HepG2 (cell line): ENCODE measurements at regions of chr17 and their contacts with region 1.

Region 1: GRCh38 chr17:54992797-54993639 is 24.5 kb downstream of the STXBP4 start:
- DNase-seq: peak; percentile 65
- ATAC-seq: peak; percentile 86
- H3K4me3 ChIP-seq: no peak overlapping the region
- H3K27ac ChIP-seq: no peak overlapping the region
- H3K4me1 ChIP-seq: no peaks in the 10 kb centered on the region
- H3K27me3 ChIP-seq: no peaks in the 10 kb centered on the region
- CTCF ChIP-seq: peak; percentile 74
- EP300 ChIP-seq: no peak
- POLR2A ChIP-seq: no peak
- RAD21 ChIP-seq: peak; percentile 57

Region 2: GRCh38 chr17:54919425-54919824 is 73.6 kb before region 1 on chr17:
- CTCF ChIA-PET with region 1: no interaction called
- POLR2A ChIA-PET with region 1: no interaction called
- in situ Hi-C with region 1: no loop called
- intact Hi-C with region 1: no loop called
- DNase-seq: no peak
- ATAC-seq: no peak
- H3K4me3 ChIP-seq: no peak overlapping the region
- H3K27ac ChIP-seq: no peak overlapping the region
- H3K4me1 ChIP-seq: no peaks in the 10 kb centered on the region
- H3K27me3 ChIP-seq: no peaks in the 10 kb centered on the region
- CTCF ChIP-seq: no peak
- EP300 ChIP-seq: no peak
- POLR2A ChIP-seq: no peak
- RAD21 ChIP-seq: no peak

Region 3: DNA sequence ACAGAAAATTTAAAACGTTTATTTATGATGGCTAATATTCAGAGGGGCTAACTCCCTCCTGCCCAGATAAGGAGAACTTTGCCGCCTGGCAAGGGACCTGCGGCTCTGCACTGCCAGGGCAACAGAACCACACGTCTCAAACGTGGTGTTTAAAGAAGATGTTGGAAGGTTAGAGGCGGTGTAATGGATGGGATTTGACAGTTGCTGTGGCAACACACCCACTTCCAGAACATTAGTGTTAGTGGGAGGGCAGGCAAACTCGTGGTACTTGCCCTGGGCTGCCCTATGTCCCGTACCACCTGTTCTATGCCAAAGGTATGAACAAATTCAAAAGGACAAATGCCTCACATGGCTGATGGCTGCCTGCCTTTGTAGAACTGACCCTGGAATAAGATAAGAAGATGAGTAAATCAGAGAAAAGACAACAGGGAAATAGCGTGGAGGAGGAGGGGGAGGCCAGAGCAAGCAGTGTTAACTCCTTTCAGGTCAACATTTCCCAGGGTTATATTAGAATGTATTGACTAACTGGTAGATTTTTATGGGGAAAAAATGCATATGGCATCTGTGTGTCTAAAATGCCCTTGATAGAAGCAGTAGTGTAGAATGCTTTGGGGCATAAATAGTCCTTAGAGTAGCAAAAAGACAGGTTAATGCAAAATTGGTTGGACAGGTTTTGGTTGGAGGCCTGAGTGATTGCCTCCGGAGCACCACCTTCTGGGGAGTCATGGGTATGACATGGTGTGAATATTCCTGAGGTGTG is 302.6 kb after region 1 on chr17:
- CTCF ChIA-PET with region 1: interaction called, 3 read pairs
- POLR2A ChIA-PET with region 1: no interaction called
- in situ Hi-C with region 1: no loop called
- intact Hi-C with region 1: loop called (anchors 1 kb)
- DNase-seq: peak; percentile 77
- ATAC-seq: peak; percentile 63
- H3K4me3 ChIP-seq: no peak overlapping the region
- H3K27ac ChIP-seq: peak overlapping the region; percentile 38
- H3K4me1 ChIP-seq: peaks cover 100% of the 10 kb centered on the region
- H3K27me3 ChIP-seq: no peaks in the 10 kb centered on the region
- CTCF ChIP-seq: peak; percentile 83
- EP300 ChIP-seq: no peak; a peak in 1 of 4 replicates
- POLR2A ChIP-seq: peak; percentile 52 to 56; a peak in 2 of 4 replicates
- RAD21 ChIP-seq: peak; percentile 83

Region 4: DNA sequence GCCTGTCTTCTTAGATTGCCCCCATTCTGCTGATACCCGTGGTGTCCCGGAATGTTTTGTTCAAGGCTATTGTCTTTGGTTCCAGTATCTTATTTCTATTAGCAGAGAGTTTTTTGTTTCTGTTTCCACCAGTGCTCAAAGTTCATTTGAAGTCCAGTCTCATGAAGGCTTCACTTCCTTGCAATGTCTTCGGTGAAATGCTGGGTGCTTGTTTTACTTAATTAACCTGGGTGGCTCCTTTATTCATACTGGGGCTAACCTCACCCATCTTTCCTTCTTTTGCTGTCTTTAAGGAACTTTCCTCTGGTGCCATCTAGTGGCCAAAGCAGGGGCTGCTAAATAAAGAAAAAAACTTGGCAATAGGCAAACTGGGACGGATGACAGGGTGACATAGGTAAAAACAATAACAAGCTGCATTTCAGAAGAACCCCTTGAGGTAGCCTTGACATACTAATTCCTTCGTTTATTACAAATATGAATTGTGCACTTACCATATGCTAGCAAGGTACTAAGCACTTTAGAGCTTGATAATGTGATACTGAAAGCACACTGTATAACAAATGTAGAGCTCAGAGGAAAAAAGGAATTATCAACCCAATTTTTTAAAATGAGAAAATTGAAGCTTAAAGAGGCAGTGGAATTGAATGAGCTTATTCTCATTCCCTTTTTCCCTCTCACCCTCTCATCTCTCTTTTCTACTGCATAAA is 521.0 kb after region 1 on chr17:
- CTCF ChIA-PET with region 1: interaction called, 4 read pairs
- POLR2A ChIA-PET with region 1: no interaction called
- in situ Hi-C with region 1: loop called (anchors 10 kb)
- intact Hi-C with region 1: loop called (anchors 5 kb)
- DNase-seq: peak; percentile 84
- ATAC-seq: peak; percentile 81
- H3K4me3 ChIP-seq: no peak overlapping the region
- H3K27ac ChIP-seq: no peak overlapping the region
- H3K4me1 ChIP-seq: peaks cover 31% of the 10 kb centered on the region
- H3K27me3 ChIP-seq: peaks cover 0 to 1% of the 10 kb centered on the region in 2 experiments; a peak in 1 of 5 replicates
- CTCF ChIP-seq: peak; percentile 93
- EP300 ChIP-seq: 0 out of 4 replicates have a peak, but pooled peaks of 1 of the 2 experiments have one; percentile 12
- POLR2A ChIP-seq: no peak
- RAD21 ChIP-seq: peak; percentile 90